Activated CD4-positive, alpha-beta memory T cell treated with anti-CD3 and anti-CD28 coated beads for 36 hours (primary cell): ENCODE measurements at regions of chr11 and their contacts with region 1.

Region 1: GRCh38 chr11:102306048-102306585 is 11.2 kb upstream of the BIRC3 start:
- DNase-seq: peak; percentile 52
- H3K4me3 Mint-ChIP-seq: peak overlapping the region; percentile 59
- H3K27ac Mint-ChIP-seq: peak overlapping the region; percentile 85
- H3K4me1 Mint-ChIP-seq: peaks cover 69% of the 10 kb centered on the region
- H3K27me3 Mint-ChIP-seq: no peaks in the 10 kb centered on the region

Region 2: DNA sequence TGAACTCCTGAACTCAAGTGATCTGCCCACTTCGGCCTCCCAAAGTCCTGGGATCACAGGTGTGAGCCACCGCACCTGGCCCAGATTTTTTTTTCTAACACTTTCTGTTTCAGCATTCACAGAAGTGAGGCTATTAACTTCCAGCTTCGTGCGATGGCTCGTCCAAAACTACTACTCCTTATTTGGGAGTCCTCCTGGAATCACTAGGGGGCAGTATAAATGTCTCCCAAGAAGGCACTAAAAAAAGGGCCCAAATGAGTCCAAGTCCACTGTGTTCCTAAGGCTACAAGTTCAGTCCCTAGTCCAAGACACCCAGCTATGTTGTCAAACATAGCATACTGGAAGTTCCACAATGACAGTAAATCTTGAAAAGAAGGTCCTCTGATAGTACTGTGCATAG is 52.1 kb before region 1 on chr11:
- CTCF ChIA-PET with region 1: no interaction called
- POLR2A ChIA-PET with region 1: no interaction called
- intact Hi-C with region 1: no loop called
- DNase-seq: no peak
- H3K4me3 Mint-ChIP-seq: no peak overlapping the region
- H3K27ac Mint-ChIP-seq: no peak overlapping the region
- H3K4me1 Mint-ChIP-seq: no peaks in the 10 kb centered on the region
- H3K27me3 Mint-ChIP-seq: no peaks in the 10 kb centered on the region

Region 3: DNA sequence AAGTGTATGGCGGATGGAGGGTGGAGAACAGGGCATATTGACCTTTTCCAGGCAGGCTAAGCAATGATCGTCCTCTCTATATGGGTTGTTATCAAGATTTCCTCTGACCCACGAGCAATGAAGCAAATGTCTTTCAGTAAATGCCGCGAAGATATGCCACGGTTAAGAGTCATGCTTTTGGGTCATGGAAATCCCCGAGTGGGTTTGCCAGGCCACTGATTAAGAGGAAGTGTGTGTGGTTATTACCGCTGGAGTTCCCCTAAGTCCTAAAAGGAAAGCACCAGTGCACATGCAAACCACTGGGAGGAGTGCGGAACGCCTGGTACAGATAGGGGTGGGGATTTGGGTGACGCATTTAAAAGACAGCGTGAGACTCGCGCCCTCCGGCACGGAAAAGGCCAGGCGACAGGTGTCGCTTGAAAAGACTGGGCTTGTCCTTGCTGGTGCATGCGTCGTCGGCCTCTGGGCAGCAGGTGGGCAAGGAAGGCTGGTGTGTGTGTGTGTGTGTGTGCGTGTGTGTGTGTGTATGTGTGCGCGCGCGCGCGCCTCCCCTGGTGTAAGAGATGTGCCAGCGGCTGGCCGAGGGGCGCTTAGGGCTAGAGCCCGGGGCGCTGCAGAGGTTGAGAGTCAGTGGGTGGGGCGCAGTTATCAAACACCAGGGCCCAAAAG is 11.1 kb after region 1 on chr11 and contains the start of gene BIRC3:
- CTCF ChIA-PET with region 1: interaction called, 15 read pairs
- POLR2A ChIA-PET with region 1: interaction called, 19 read pairs
- intact Hi-C with region 1: loop called (anchors 1 kb)
- DNase-seq: peak; percentile 96
- H3K4me3 Mint-ChIP-seq: peak within 1 kb of the TSS; percentile 95
- H3K27ac Mint-ChIP-seq: peak within 1 kb of the TSS; percentile 100
- H3K4me1 Mint-ChIP-seq: peaks cover 56% of the 10 kb centered on the region
- H3K27me3 Mint-ChIP-seq: no peaks in the 10 kb centered on the region
- total RNA-seq, gene BIRC3: 135 to 139 TPM

Region 4: DNA sequence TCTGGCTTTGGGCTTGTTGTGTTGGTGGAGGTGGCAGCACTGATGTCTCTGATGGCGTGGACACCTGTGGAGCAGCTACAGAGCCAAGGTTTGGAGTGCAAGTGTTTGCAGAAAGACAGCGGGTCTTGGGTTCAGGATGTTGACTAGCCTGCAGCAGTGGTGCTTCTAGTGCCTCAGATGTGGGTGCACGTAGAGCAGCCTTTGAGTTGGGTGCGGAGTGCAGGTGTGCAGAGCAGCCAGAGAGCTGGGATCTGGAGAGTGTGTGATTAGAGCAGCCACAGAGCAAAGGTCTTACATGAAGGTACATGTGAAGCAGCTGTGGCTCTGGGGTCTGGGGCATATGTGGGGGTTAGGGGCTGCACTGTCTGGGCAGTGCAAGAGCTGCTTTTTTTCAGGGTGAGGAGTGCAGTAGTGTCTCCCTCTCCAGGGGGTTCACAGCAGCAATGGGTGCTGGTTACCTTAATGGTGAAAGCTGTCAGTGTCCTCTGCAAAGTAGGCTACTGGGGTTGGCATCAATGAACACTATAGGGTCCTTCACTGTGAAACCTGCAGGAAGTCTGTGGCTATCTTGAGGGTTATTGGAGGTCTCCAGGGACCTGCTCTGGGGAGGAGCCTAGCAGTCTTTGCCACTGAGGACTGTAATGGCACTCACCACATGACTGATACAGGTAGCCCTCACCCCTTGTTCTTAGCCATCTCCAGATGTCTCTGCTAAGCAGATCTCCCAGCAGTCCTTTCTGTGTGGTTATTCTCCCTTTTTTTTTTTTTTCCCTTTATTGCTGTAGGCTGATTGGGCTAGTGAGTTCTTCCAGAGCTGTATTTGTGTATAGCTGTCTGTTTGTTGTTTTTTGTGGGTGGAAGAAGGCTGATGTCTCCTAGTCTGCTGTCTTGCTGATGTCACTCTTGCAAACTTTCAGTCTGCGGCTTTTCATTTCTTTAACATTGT is 55.2 kb after region 1 on chr11:
- CTCF ChIA-PET with region 1: no interaction called
- POLR2A ChIA-PET with region 1: no interaction called
- intact Hi-C with region 1: no loop called
- DNase-seq: peak; percentile 26
- H3K4me3 Mint-ChIP-seq: peak overlapping the region; percentile 10
- H3K27ac Mint-ChIP-seq: peak overlapping the region; percentile 51
- H3K4me1 Mint-ChIP-seq: peaks cover 49% of the 10 kb centered on the region
- H3K27me3 Mint-ChIP-seq: no peaks in the 10 kb centered on the region

Region 5: DNA sequence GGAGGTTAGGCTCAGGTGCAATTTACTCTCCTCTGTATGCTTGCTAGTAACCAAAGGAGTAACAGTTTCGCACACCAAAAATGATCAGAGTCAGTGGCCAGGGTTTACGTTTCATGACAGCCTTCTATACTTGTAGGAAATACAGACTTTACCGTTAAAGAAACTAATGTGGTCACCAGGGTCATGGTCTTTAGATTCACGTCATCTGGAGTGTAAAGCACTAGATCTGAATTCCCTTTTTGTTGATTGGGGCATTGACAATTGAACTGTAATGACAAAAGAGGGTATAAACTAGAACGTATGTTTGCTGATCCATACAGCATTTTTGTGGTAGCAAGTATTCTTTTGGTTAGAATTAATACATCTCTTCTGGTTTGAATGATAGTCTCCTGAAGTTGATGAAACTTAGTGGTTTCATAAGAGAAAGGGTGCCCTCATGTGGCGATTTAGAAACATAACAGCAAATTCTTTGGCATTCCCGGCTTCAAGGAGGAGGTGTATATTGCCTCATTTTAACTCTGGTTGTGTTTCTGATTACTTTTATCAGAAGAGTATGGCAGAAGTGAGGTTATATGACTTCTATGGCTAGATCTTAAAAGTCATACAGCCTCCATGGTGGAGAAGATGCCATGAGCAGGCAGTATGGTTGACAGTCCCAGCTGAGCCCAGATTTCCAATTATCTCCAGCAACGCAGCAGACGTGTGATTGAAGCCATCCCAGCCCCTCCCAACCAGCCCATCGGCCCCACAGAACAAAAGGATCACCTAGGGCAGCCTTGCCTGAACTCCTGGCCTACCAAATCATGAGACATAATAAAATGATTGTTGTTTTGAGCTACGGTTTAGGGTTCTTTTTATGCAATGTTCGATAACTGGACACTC is 189.3 kb after region 1 on chr11:
- CTCF ChIA-PET with region 1: no interaction called
- POLR2A ChIA-PET with region 1: no interaction called
- intact Hi-C with region 1: no loop called
- DNase-seq: peak; percentile 22
- H3K4me3 Mint-ChIP-seq: no peak overlapping the region
- H3K27ac Mint-ChIP-seq: no peak overlapping the region
- H3K4me1 Mint-ChIP-seq: peaks cover 18% of the 10 kb centered on the region
- H3K27me3 Mint-ChIP-seq: peaks cover 7% of the 10 kb centered on the region